Activated CD4-positive, alpha-beta memory T cell treated with anti-CD3 and anti-CD28 coated beads for 36 hours (primary cell): ENCODE measurements at regions of chr9 and their contacts with region 1.

Region 1: DNA sequence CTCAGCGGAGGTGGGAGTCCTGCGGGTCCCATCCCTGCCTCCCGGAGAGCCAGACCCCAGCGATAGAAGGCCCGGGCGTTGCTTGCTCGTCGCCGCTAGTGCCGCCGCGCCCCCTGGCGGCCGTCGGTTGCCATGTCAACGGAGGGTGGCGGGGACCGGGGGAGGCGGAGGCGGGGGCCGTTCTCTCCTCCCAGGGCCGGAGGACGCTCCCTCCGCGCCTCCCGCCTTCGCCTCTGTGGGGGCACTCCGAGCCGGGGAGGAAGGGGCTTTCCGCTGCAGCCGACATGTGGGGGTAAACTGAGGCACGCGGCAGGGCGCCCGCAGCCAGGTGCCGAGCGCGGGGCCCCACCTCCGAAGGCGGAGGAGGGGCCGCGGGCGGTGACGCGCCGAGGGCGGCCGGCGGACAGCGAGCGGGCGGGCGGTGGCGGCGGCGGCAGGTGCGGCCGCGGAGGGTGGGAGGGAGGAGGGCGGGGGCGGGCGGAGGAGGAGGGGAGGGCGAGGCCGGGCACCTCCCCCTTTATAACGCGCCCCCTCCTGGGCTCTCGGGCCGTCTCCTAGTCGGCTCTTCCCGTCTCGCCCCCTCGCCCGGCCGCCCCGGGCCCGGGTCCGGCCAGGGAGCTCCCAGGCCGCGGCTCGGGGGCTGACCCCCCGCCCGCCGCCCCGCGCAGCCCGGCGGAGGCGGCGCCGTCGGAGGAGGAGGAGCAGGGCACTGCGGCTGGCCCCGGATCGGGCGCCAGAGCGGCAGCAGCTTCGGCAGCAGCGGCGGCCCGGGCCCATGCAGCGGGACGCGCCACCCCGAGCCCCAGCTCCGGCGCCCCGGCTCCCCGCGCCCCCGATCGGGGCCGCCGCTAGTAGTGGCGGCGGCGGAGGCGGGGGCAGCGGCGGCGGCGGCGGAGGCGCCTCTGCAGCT is 556 bp upstream of the CDK9 start:
- DNase-seq: peak; percentile 93
- H3K4me3 Mint-ChIP-seq: peak overlapping the region; percentile 77
- H3K27ac Mint-ChIP-seq: peak overlapping the region; percentile 96
- H3K4me1 Mint-ChIP-seq: peaks cover 76% of the 10 kb centered on the region
- H3K27me3 Mint-ChIP-seq: no peaks in the 10 kb centered on the region

Region 2: DNA sequence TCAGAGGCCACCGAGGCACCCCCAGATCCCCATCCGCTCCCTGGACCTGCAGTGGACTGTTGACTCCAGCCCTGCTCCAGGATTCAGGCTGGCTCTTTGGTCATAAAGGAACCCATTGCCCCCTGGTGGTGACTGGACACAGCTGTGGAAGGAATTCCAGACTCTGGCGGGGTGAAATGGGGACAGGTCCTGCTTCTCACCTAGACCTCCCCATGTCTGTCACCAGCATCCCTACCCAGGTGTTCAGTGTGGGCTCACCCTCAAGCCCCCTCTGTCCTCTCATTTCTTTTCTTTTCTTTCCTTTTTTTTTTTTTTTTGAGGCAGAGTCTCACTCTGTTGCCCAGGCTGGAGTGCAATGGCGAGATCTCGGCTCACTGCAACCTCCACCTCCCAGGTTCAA is 198.7 kb before region 1 on chr9:
- CTCF ChIA-PET with region 1: no interaction called
- POLR2A ChIA-PET with region 1: no interaction called
- intact Hi-C with region 1: loop called (anchors 5 kb)
- DNase-seq: peak; percentile 71
- H3K4me3 Mint-ChIP-seq: no peak overlapping the region
- H3K27ac Mint-ChIP-seq: no peak overlapping the region
- H3K4me1 Mint-ChIP-seq: peaks cover 9% of the 10 kb centered on the region
- H3K27me3 Mint-ChIP-seq: peaks cover 6% of the 10 kb centered on the region

Region 3: DNA sequence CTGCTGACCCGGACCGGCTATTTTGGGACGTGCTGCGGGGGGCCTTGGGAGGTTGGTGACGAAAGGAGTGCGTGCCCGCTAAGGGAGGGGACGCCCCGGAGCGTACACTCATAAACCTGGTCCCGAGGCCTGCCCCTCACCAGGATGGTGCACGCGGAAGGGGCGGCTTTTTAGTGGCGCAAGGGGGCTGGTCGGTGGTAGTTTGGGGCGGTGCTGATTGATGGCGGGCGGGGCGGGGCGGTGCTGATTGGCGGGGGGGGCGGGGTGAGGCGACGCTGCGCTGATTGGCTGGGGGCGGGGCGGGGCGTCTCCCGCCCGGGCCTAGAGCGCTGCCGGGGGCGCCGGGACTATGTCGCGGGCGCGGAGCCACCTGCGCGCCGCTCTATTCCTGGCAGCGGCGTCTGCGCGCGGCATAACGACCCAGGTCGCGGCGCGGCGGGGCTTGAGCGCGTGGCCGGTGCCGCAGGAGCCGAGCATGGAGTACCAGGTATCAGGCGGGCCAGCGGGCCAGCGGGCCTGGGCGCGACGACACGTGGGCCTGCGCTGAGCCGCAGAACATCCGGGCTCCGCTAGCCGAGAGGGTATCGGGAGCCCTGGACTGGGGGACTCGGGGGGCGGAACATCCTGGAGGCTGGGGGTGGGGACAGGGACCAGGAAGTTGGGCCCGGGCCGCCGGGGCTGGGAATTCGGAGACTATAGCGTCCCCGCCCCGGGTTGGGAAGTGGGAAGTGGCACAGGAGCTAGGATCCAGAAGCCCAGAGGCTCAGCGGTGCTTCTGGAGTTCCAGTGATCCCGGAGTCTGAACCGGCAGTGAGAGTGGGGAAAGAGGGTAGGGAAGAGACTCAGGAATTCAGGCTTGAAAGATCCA is 17.5 kb after region 1 on chr9 and contains the start of gene FPGS:
- CTCF ChIA-PET with region 1: interaction called, 4 read pairs
- POLR2A ChIA-PET with region 1: interaction called, 7 read pairs
- intact Hi-C with region 1: loop called (anchors 1 kb)
- DNase-seq: peak; percentile 91
- H3K4me3 Mint-ChIP-seq: peak within 1 kb of the TSS; percentile 88
- H3K27ac Mint-ChIP-seq: peak within 1 kb of the TSS; percentile 88
- H3K4me1 Mint-ChIP-seq: peaks cover 24% of the 10 kb centered on the region
- H3K27me3 Mint-ChIP-seq: no peaks in the 10 kb centered on the region
- total RNA-seq, gene FPGS: 80.0 to 83.9 TPM

Region 4: GRCh38 chr9:127869310-127870152 is 84.3 kb after region 1 on chr9:
- CTCF ChIA-PET with region 1: interaction called, 21 read pairs
- POLR2A ChIA-PET with region 1: no interaction called
- intact Hi-C with region 1: loop called (anchors 1 kb)
- DNase-seq: peak; percentile 89
- H3K4me3 Mint-ChIP-seq: no peak overlapping the region
- H3K27ac Mint-ChIP-seq: no peak overlapping the region
- H3K4me1 Mint-ChIP-seq: peaks cover 13% of the 10 kb centered on the region
- H3K27me3 Mint-ChIP-seq: no peaks in the 10 kb centered on the region

Region 5: GRCh38 chr9:127916665-127917613 is 131.7 kb after region 1 on chr9 and contains the start of gene ST6GALNAC4:
- CTCF ChIA-PET with region 1: interaction called, 13 read pairs
- POLR2A ChIA-PET with region 1: interaction called, 5 read pairs
- intact Hi-C with region 1: no loop called
- DNase-seq: peak; percentile 98
- H3K4me3 Mint-ChIP-seq: peak within 1 kb of the TSS; percentile 77
- H3K27ac Mint-ChIP-seq: peak within 1 kb of the TSS; percentile 54
- H3K4me1 Mint-ChIP-seq: peaks cover 43% of the 10 kb centered on the region
- H3K27me3 Mint-ChIP-seq: no peaks in the 10 kb centered on the region
- total RNA-seq, gene ST6GALNAC4: 21.2 to 23.5 TPM

Region 6: DNA sequence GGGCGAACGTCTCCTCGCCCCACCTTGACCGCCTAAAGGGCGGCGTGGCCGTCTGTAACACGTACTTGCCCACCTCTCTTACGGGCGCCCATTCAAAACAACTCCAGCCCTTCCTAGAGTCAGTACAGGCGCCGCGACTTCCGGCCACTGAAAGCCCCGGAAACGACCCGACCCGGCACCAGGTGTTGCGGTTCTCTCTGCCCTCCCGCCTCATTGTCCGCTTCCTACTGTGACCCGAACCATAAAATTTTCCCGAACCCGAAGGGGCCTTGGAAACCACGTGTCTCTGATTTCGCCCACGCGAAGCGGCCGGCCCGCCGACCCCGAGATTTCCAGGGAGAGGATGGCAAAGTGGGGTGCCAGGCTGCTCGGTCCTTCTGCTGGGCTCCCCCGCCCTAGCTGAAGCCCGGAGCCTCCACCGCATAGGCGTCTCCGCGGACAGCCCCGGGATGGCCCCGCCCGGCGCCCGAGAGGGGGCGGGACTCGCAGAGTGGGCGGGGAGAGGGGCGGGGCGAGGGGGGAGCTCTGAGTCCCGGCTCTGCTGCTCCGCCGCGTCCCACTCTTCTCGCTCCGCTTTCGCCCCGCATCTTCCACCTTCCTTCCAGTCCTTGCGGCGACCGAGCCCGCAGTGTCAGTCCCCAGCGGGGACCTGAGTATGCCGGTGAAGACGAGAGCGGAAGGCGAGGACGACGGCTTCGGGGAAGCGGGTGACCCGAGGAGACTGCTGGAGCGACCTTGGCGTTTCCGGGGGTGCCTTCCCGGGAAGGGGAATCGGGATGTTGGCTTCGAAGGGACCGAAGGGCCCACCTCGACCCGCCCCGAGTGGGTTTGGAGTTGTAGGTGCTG is 342.9 kb after region 1 on chr9:
- CTCF ChIA-PET with region 1: no interaction called
- POLR2A ChIA-PET with region 1: no interaction called
- intact Hi-C with region 1: loop called (anchors 5 kb)
- DNase-seq: peak; percentile 88
- H3K4me3 Mint-ChIP-seq: peak overlapping the region; percentile 96
- H3K27ac Mint-ChIP-seq: peak overlapping the region; percentile 89
- H3K4me1 Mint-ChIP-seq: peaks cover 28% of the 10 kb centered on the region
- H3K27me3 Mint-ChIP-seq: no peaks in the 10 kb centered on the region